ENCODE measurements at regions of chr5 and their contacts with region 1.

Region 1: GRCh38 chr5:129074903-129075302 is 19.6 kb upstream of the ISOC1 start:
- DNase-seq: no peak
- H3K4me3 ChIP-seq: no peak overlapping the region
- CTCF ChIP-seq: no peak
- POLR2A ChIP-seq: no peak

Region 2: GRCh38 chr5:127723572-127723971 is 1351.3 kb before region 1 on chr5:
- intact Hi-C with region 1: no loop called
- DNase-seq: peak in 1 of 2 donors; percentile 25
- H3K4me3 ChIP-seq: no peak overlapping the region
- CTCF ChIP-seq: no peak
- POLR2A ChIP-seq: no peak

Region 3: GRCh38 chr5:128695791-128696530 is 378.9 kb before region 1 on chr5:
- intact Hi-C with region 1: no loop called
- DNase-seq: no peak
- H3K4me3 ChIP-seq: no peak overlapping the region
- CTCF ChIP-seq: no peak
- POLR2A ChIP-seq: no peak

Region 4: DNA sequence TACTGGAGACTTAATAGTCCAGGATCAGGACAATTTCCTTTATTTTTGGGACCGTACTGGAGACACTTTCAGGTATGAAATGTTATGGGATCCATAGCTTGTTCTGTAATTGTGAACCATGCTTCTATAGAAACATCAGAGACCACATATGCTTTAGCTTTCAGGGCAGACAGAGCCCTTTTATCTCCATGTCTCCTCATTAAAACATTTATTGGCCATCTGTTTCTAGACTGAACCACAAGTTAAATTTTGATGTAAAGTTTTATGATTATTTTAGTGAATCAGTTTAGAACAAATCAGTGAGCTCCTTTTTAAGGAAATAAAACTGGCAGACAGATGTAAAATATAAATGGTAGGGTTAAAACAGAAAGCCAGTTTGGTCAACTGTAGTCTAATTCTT is 47.6 kb before region 1 on chr5:
- intact Hi-C with region 1: loop called (anchors 2 kb)
- DNase-seq: no peak
- H3K4me3 ChIP-seq: no peak overlapping the region
- CTCF ChIP-seq: no peak
- POLR2A ChIP-seq: no peak

Measured in lower leg skin (tissue), 4 donors.